RWPE1 (cell line): ENCODE measurements at regions of chr5 and their contacts with region 1.

Region 1: GRCh38 chr5:148957591-148958202 is 105.2 kb downstream of the SH3TC2 start:
- DNase-seq: peak; percentile 62
- H3K27ac ChIP-seq: no peak overlapping the region
- CTCF ChIP-seq: peak; percentile 82

Region 2: GRCh38 chr5:148740966-148741742 is 216.5 kb before region 1 on chr5:
- CTCF ChIA-PET with region 1: interaction called, 10 read pairs
- POLR2A ChIA-PET with region 1: no interaction called
- DNase-seq: peak; percentile 77
- H3K27ac ChIP-seq: no peak overlapping the region
- CTCF ChIP-seq: peak; percentile 85

Region 3: GRCh38 chr5:148912714-148913398 is 44.8 kb before region 1 on chr5:
- CTCF ChIA-PET with region 1: interaction called, 11 read pairs
- POLR2A ChIA-PET with region 1: no interaction called
- DNase-seq: peak; percentile 100
- H3K27ac ChIP-seq: peak overlapping the region; percentile 97
- CTCF ChIP-seq: peak; percentile 72; the same call in 1 of the 2 replicates

Region 4: DNA sequence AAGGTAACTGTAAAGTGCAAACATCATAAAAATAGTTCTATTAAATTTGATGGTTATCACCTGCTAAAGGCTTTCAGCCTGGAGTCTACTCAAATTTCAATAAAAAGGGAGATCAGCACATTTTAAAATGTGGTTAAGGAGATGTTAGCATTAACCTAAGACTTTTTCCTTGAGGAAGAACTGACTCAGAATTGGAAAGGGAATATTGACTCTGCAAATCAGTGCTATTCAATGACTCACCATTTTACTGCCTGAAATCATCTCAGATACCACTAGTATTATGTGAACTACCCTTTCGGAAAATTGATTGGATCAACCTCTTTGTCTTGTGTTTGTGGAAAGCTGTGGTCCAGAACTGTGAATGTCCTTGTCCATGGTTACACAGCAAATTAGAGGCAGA is 18.0 kb before region 1 on chr5:
- CTCF ChIA-PET with region 1: interaction called, 13 read pairs
- POLR2A ChIA-PET with region 1: no interaction called
- DNase-seq: peak; percentile 75
- H3K27ac ChIP-seq: no peak overlapping the region
- CTCF ChIP-seq: no peak